ENCODE measurements at regions of chr19 and their contacts with region 1.

Region 1: DNA sequence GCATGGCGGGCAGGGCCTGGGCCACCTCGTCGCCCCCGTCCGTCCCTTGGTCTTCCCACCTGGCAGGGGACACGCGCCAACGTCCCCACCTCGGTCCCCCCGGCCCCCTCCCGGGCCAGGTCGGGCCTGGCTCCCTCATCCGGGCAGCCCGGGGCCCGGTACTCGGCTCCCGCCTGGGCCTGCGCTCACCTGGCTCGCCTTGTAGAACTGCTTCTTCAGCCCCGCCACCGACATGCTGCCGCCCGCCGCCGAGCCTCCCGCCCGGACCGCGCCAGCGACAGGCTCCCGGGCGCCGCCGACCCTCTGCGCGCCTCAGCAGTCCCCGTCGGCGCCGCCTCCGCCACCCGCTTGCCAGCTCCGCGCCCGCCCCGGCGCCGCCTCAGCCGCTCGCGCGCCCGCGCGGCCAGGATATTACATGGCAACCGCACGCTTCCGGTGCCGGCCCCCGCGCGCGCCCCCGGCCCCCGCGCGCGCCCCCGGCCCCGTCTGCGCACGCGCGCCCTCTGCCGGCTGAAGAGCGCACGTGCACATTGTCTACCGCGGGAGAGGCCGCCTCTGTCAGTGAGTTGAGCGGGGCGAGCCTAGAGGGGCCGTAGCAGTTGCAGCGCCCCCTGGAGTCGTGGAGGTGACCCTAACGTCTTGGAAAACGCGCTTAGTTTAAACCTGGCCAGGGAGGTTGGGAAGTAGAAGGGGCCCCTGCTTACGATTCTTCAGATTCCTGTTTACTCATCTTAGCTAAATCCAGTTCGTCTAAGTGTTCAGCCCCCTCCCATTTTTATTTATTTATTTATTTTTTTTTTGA is at the start of gene SH3GL1:
- DNase-seq: peak; percentile 95
- ATAC-seq: peak; percentile 54
- H3K4me3 Mint-ChIP-seq: peak within 1 kb of the TSS; percentile 93
- H3K27ac Mint-ChIP-seq: peak within 1 kb of the TSS; percentile 95
- H3K4me1 Mint-ChIP-seq: peaks cover 62% of the 10 kb centered on the region
- H3K27me3 Mint-ChIP-seq: no peaks in the 10 kb centered on the region
- total RNA-seq, gene SH3GL1: 42.0 to 46.8 TPM

Region 2: GRCh38 chr19:3762501-3763459 is 637.6 kb before region 1 on chr19 and contains the start of gene MRPL54:
- CTCF ChIA-PET with region 1: no interaction called
- POLR2A ChIA-PET with region 1: no interaction called
- intact Hi-C with region 1: loop called in 1 of 2 experiments (anchors 2 kb)
- DNase-seq: peak; percentile 100
- ATAC-seq: peak; percentile 88
- H3K4me3 Mint-ChIP-seq: peak within 1 kb of the TSS; percentile 100
- H3K27ac Mint-ChIP-seq: peak within 1 kb of the TSS; percentile 99
- H3K4me1 Mint-ChIP-seq: peaks cover 39% of the 10 kb centered on the region
- H3K27me3 Mint-ChIP-seq: no peaks in the 10 kb centered on the region
- total RNA-seq, gene MRPL54: 54.8 to 63.9 TPM

Region 3: DNA sequence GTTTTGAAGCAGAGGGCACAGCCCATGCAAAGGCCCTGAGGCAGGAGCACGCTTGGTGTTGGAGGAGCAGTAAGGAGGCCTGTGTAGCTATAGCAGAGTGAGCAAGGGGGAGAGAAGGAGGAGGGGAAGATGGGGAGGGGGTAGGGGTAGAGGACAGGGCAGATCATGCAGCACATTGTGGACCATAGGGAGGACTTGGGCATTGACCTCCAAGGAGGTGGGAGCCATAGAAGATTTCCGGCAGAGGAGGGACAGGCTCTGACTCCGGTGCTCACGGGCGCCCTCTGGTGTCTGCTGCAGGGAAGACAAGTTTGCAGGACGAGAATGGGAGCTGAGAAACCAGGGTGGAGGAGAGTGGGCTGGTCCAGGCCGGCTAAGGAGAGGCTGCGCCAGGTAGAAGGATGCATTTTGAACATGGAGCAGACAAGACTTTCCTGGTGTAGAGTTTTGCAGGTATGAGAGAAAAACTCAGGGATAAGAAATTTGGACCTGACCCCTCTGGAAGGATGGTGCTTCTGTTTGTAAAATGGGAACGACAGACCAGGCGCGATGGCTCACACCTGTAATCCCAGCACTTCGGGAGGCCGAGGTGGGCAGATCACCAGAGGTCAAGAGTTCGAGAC is 260.6 kb before region 1 on chr19:
- CTCF ChIA-PET with region 1: no interaction called
- POLR2A ChIA-PET with region 1: no interaction called
- intact Hi-C with region 1: no loop called
- DNase-seq: peak; percentile 94
- ATAC-seq: peak; percentile 92
- H3K4me3 Mint-ChIP-seq: peak overlapping the region; percentile 23
- H3K27ac Mint-ChIP-seq: peak overlapping the region; percentile 34
- H3K4me1 Mint-ChIP-seq: peaks cover 10% of the 10 kb centered on the region
- H3K27me3 Mint-ChIP-seq: peaks cover 3% of the 10 kb centered on the region

Region 4: GRCh38 chr19:4182084-4182810 is 218.1 kb before region 1 on chr19 and contains the starts of genes ANKRD24 and SIRT6:
- CTCF ChIA-PET with region 1: no interaction called
- POLR2A ChIA-PET with region 1: no interaction called
- intact Hi-C with region 1: loop called in 1 of 2 experiments (anchors 5 kb)
- DNase-seq: peak; percentile 98
- ATAC-seq: peak; percentile 84
- H3K4me3 Mint-ChIP-seq: peak within 1 kb of the TSS; percentile 92
- H3K27ac Mint-ChIP-seq: peak within 1 kb of the TSS; percentile 93
- H3K4me1 Mint-ChIP-seq: peaks cover 30% of the 10 kb centered on the region
- H3K27me3 Mint-ChIP-seq: no peaks in the 10 kb centered on the region
- total RNA-seq, gene ANKRD24: 1.1 to 1.3 TPM
- total RNA-seq, gene SIRT6: 26.2 to 29.4 TPM

Region 5: GRCh38 chr19:4328243-4328990 is 71.9 kb before region 1 on chr19:
- CTCF ChIA-PET with region 1: no interaction called
- POLR2A ChIA-PET with region 1: no interaction called
- intact Hi-C with region 1: loop called in 1 of 2 experiments (anchors 1 kb)
- DNase-seq: peak; percentile 100
- ATAC-seq: peak; percentile 85
- H3K4me3 Mint-ChIP-seq: peak overlapping the region; percentile 93
- H3K27ac Mint-ChIP-seq: peak overlapping the region; percentile 94
- H3K4me1 Mint-ChIP-seq: peaks cover 27% of the 10 kb centered on the region
- H3K27me3 Mint-ChIP-seq: no peaks in the 10 kb centered on the region

Region 6: DNA sequence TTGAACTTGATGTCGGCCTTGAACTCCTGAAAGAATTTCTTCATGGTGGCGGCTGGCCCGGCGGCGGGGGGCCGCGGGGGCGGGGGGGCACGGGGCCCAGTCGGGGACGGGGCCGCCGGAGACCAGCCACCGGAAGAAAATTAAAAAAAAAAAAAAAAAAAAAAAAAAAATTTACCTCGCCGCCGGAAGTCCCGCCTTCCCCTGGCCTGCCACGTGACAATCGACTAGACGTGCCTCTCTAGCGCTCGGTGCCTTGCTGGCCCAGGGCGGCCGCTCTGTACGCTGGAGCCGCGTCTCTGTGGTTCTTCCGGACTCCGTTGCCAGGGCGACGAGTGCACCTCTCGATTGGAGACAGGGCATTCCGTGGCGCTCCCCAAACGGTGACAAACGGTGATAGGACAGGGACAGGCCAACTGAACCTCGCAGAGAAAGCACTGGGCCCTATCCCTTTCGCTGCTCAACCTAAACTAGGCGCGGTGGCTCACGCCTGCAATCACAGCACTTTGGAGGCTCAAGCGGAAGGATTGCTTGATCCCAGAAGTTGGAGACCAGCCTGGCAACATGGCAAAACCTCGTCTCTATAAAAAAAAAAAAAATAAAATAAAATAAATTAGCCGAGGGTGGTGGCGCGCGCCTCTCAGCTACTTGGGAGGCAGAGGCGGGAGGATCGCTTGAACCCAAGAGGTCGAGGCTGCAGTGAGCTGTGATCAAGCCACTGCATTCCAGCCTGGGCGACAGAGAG is 57.5 kb after region 1 on chr19 and contains the start of gene UBXN6:
- CTCF ChIA-PET with region 1: interaction called, 4 read pairs
- POLR2A ChIA-PET with region 1: no interaction called
- intact Hi-C with region 1: loop called (anchors 1 kb)
- DNase-seq: peak; percentile 99
- ATAC-seq: peak; percentile 93
- H3K4me3 Mint-ChIP-seq: peak within 1 kb of the TSS; percentile 86
- H3K27ac Mint-ChIP-seq: peak within 1 kb of the TSS; percentile 86
- H3K4me1 Mint-ChIP-seq: peaks cover 19% of the 10 kb centered on the region
- H3K27me3 Mint-ChIP-seq: no peaks in the 10 kb centered on the region
- total RNA-seq, gene UBXN6: 32.9 to 38.4 TPM

Region 7: DNA sequence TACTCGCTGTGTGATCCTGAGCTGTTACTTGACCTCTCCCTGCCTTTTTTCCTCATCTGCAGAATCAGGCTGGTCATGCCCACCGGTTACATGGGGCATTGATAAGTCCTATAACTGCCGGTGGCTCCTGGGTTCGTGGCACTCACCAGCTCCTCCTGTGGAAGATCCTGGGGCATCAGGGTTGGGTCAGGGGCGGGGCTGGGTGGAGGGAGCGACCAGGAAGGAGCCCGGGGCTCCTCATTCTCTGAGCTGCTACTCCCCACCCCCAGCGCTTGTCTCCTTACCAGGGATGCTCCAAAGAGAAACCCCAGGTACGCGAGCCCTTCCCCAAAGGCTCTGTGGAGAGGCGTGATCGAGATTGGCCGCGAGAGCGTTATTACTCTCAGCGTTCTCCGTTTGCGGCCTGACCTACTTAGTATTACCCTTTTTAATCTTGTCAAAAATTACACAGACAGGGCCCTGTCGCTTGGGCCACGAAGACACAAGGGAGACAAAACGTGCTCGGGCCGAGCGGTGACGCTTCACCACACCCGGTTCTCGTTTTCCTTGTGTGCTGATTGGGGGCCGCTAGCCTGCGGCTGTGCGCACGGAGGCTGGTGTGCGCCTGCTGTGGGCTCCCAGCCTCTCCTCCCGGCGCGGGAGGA is 82.5 kb after region 1 on chr19:
- CTCF ChIA-PET with region 1: no interaction called
- POLR2A ChIA-PET with region 1: no interaction called
- intact Hi-C with region 1: no loop called
- DNase-seq: no peak
- ATAC-seq: no peak
- H3K4me3 Mint-ChIP-seq: no peak overlapping the region
- H3K27ac Mint-ChIP-seq: no peak overlapping the region
- H3K4me1 Mint-ChIP-seq: no peaks in the 10 kb centered on the region
- H3K27me3 Mint-ChIP-seq: no peaks in the 10 kb centered on the region

Region 8: GRCh38 chr19:4539693-4540581 is 139.6 kb after region 1 on chr19 and contains the start of gene LRG1:
- CTCF ChIA-PET with region 1: no interaction called
- POLR2A ChIA-PET with region 1: no interaction called
- intact Hi-C with region 1: no loop called
- DNase-seq: peak; percentile 54
- ATAC-seq: peak; percentile 68
- H3K4me3 Mint-ChIP-seq: no peak within 1 kb of the TSS
- H3K27ac Mint-ChIP-seq: no peak within 1 kb of the TSS
- H3K4me1 Mint-ChIP-seq: peaks cover 16% of the 10 kb centered on the region
- H3K27me3 Mint-ChIP-seq: peaks cover 7% of the 10 kb centered on the region
- total RNA-seq, gene LRG1: 0.35 to 0.57 TPM

Region 9: DNA sequence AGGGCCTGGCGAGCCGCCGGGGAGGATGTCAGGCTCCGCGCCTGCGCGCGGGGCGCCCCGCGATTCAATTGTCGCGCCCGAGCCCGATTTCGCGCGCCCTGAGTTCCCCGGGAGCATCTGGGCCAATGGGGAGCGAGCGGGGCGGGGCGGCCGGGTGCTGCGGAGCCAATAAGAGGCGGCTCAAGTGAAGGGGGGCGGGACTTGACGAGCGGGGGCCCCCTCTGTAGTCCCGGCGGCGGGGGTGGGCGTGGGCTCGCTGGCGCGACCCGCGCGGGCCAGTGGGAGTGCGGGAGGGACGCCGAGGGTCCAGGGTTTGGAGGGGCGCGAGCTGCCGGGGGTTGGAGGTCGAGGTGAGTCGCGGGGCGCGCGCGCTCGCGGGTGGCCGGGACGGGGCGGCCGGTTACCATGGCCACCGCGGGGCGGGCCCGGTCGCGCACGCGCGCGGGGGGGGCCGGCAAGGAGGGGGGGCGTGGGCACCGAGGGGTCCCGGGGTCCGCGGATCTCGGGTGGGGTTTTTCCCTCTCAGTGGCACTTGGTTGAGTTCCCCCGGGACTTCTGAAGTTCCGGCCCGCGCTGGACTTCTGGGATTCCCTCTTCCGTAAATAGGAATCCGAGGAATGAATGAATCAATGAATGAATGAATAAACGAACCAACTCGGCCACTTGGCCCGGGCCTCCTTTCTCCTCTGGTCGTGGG is 509.7 kb after region 1 on chr19:
- CTCF ChIA-PET with region 1: no interaction called
- POLR2A ChIA-PET with region 1: no interaction called
- intact Hi-C with region 1: loop called in 1 of 2 experiments (anchors 10 kb)
- DNase-seq: peak; percentile 98
- ATAC-seq: peak; percentile 78
- H3K4me3 Mint-ChIP-seq: peak overlapping the region; percentile 83
- H3K27ac Mint-ChIP-seq: peak overlapping the region; percentile 90
- H3K4me1 Mint-ChIP-seq: peaks cover 42% of the 10 kb centered on the region
- H3K27me3 Mint-ChIP-seq: no peaks in the 10 kb centered on the region

Measured in activated CD4-positive, alpha-beta T cell treated with anti-CD3 and anti-CD28 coated beads for 36 hours (primary cell).